Right lobe of liver (tissue), 6 donors: ENCODE measurements at regions of chr5 and their contacts with region 1.

Region 1: DNA sequence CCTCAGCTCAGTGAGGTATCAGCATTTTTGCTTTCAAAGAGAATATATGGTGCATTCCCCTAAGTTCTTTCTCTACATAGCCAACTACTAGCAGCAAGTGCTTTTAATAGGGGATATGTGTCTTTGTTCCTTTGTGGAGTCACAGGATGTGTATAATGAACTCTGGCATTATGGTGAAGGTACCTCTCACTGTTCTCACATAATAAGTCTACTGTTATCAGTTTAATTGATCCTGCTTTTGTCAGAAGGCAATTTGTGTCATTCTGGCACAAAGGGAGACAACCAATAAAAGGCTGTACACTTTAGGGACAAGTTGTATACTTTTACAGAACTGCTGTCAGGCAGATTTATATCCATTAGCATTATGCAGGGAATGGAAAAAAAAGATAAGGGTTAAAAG is 531.4 kb upstream of the RIOK2 start:
- DNase-seq: no peak
- ATAC-seq: no peak
- H3K4me3 ChIP-seq: no peak overlapping the region
- H3K27ac ChIP-seq: no peak overlapping the region
- H3K4me1 ChIP-seq: no peaks in the 10 kb centered on the region
- H3K27me3 ChIP-seq: no peaks in the 10 kb centered on the region
- CTCF ChIP-seq: no peak
- POLR2A ChIP-seq: no peak

Region 2: GRCh38 chr5:97764700-97765099 is 50.3 kb after region 1 on chr5:
- intact Hi-C with region 1: loop called in 1 of 2 experiments (anchors 5 kb)
- DNase-seq: no peak
- ATAC-seq: peak in 1 of 4 donors; percentile 31
- H3K4me3 ChIP-seq: no peak overlapping the region
- H3K27ac ChIP-seq: no peak overlapping the region
- H3K4me1 ChIP-seq: no peaks in the 10 kb centered on the region
- H3K27me3 ChIP-seq: no peaks in the 10 kb centered on the region
- CTCF ChIP-seq: no peak
- POLR2A ChIP-seq: no peak

Region 3: DNA sequence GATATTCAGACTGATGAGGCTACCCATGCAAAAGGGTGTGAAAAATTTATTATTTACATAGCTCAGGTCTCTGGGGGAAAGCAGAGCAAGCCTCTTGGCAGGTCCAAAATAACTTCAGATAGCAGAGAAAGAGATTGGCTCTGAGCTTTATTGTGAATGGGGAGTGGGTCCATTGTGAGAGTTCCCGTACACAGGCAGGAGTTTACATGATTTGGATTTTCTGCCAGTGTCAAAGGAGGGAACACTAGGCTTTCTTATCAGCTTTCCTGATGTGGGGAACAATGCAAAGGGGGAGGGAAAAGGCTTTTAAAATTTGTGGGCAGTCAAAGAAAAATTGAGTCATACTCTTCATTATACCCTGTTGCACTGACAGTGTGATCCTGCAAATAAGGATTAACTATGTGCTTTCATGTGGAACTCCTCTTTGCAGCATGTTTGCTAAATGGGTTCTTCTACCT is 83.6 kb after region 1 on chr5:
- intact Hi-C with region 1: no loop called
- DNase-seq: no peak
- ATAC-seq: no peak
- H3K4me3 ChIP-seq: no peak overlapping the region
- H3K27ac ChIP-seq: no peak overlapping the region
- H3K4me1 ChIP-seq: no peaks in the 10 kb centered on the region
- H3K27me3 ChIP-seq: no peaks in the 10 kb centered on the region
- CTCF ChIP-seq: no peak
- POLR2A ChIP-seq: no peak

Region 4: GRCh38 chr5:97923496-97923895 is 209.1 kb after region 1 on chr5:
- intact Hi-C with region 1: no loop called
- DNase-seq: no peak
- ATAC-seq: no peak
- H3K4me3 ChIP-seq: no peak overlapping the region
- H3K27ac ChIP-seq: no peak overlapping the region
- H3K4me1 ChIP-seq: no peaks in the 10 kb centered on the region
- H3K27me3 ChIP-seq: no peaks in the 10 kb centered on the region
- CTCF ChIP-seq: no peak
- POLR2A ChIP-seq: no peak